Activated CD8-positive, alpha-beta memory T cell treated with anti-CD3 and anti-CD28 coated beads, Interleukin-2, amount 10 ng/mL, durations not matched to agents 7 days and 5 days (primary cell): ENCODE measurements at regions of chr17 and their contacts with region 1.

Region 1: DNA sequence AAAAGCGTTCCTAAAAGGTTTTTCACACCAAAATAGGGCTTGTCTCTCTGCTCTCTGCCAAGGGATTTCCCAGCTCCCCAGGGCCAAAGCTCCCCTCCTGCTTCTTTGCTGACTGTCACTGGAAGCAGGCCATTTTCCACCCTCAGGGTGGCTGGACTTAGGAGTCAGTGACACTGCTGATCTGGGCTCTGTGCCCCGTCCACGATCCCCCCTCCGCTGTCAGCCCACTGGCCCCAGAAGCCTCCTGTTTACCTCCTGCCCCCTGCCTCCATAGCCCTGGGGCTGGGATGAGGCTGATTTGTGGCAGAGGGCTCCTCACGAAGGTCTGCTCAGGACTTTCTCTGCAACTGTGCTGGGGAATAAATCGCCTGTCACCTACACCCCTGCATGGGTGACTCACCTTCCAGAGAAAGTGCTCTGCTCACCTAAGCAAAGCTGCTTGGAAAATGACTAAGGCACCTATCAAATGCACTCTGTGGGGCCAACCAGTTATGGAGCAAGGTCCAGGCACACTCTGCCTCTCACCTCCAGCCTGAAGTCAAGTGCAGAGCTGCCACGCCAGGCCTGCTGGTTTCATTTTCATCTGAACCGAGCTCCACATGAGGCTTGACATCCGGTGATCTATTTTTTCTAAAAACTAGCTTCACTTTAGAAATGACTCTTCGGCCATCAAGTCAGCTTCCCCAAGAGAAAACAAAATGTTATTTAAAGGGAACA is 4.9 kb downstream of the MAP3K14 start:
- DNase-seq: peak; percentile 94
- ATAC-seq: peak; percentile 57
- H3K4me3 Mint-ChIP-seq: peak overlapping the region; percentile 97
- H3K27ac Mint-ChIP-seq: peak overlapping the region; percentile 90
- H3K4me1 Mint-ChIP-seq: peaks cover 70% of the 10 kb centered on the region
- H3K27me3 Mint-ChIP-seq: no peaks in the 10 kb centered on the region

Region 2: DNA sequence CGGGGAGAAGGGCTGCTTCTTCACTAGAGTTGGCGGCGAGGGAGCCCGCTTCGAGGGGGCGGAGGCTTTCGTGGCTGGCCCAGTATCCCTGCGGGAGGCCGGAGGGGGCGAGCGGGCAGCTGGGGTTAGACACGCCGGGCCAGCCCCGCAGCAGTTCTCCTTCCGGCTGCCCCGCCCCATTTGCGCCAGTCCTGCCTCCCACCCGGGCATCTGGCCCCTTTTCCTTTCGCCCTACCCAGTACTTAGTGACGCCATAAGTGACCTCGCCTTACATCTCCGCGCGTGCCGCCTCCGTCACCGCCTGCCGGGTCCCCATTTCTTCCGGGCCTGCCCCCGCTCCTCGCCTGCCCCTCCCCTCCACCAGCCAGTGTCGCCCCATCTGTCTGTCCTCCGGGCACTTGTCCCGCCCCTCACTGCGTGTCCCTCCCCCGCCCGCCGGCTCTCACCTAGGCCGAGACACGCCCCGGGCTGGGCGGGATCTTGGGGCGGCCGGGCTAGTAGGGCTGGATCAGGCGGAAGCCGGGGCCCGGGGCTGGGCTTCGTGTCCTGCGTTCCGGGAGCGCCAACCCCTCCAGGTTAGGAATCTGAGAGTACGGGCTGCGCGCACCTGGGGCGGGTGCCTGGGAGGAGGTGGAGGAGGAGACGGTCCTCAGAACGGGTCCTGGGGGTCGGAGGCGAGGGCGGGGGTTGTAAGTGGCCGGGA is 64.3 kb before region 1 on chr17:
- CTCF ChIA-PET with region 1: interaction called, 13 read pairs
- DNase-seq: peak; percentile 100
- ATAC-seq: peak; percentile 91
- H3K4me3 Mint-ChIP-seq: peak overlapping the region; percentile 82
- H3K27ac Mint-ChIP-seq: peak overlapping the region; percentile 96
- H3K4me1 Mint-ChIP-seq: peaks cover 60% of the 10 kb centered on the region
- H3K27me3 Mint-ChIP-seq: no peaks in the 10 kb centered on the region

Region 3: DNA sequence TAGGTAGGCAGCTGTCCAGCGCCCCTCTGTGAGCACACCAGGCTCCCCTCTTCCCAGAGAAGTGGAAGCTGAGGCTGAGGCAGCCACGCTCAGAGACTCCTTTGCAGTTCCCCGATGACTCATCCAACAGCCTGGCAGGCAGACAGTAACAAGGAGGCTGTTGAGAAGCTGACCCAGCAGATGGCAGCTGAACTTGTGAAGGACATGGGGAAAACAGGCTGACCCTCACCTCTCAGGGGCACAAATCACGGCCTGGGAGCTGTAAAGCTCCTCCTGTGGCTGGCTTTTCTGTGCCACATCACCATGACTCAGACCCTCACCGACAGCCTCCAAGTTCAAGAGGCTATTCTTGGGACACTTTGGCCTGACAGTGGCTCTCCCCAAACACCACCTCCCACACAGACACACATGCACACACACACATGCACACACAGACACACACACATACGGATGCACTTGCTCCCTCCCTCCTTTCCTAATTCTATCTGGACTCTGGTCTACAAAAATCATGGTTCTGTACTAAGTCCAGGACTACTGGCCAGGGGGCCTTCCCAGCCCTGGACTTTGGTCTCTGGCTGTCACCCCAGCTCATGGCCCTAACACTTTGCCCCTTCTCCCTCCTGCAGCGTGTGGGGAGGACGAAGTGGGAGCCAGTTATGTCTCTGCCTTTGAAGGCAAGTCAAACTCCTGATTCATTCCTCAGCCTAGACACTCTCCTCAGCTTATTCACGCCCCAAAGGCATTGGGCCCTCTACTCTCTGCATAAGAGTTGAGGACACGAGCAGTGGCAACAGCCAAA is 18.3 kb before region 1 on chr17:
- CTCF ChIA-PET with region 1: interaction called, 16 read pairs
- DNase-seq: no peak
- ATAC-seq: peak; percentile 55
- H3K4me3 Mint-ChIP-seq: no peak overlapping the region
- H3K27ac Mint-ChIP-seq: peak overlapping the region; percentile 61
- H3K4me1 Mint-ChIP-seq: peaks cover 82% of the 10 kb centered on the region
- H3K27me3 Mint-ChIP-seq: no peaks in the 10 kb centered on the region

Region 4: DNA sequence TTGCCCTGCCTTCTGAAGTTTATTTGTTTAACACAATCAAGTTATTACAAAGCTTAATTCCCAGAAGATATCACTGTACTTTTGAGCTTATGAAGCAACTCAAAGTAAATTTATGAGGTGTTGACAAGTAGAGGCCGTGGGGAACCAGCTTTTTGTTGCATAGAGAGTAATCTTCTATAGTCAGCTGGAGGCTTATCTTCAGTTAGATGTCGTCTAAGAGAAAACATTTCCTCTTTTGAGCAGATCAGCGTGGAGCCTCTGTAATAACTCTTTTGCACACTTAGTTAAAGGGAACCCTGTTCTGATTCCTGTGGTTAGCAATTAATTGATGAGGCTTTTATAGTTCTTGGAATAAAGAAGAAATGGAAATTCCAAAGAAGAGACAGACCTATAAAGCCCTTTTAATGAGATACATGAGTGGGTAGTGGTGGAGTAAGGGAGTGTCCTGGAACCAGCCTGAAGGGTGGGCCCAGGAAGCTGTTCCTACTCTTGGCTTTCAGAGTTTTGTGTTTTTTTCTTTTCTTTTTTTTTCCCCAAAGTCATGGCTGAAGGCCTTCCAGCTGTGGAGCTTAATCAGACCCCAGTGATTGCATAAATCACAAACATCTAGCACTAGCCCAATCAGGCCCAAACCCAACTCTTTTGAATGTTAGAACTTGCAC is 33.8 kb after region 1 on chr17:
- CTCF ChIA-PET with region 1: no interaction called
- DNase-seq: no peak
- ATAC-seq: no peak
- H3K4me3 Mint-ChIP-seq: no peak overlapping the region
- H3K27ac Mint-ChIP-seq: no peak overlapping the region
- H3K4me1 Mint-ChIP-seq: no peaks in the 10 kb centered on the region
- H3K27me3 Mint-ChIP-seq: peaks cover 16% of the 10 kb centered on the region